ENCODE measurements at regions of chrX and their contacts with region 1.

Region 1: DNA sequence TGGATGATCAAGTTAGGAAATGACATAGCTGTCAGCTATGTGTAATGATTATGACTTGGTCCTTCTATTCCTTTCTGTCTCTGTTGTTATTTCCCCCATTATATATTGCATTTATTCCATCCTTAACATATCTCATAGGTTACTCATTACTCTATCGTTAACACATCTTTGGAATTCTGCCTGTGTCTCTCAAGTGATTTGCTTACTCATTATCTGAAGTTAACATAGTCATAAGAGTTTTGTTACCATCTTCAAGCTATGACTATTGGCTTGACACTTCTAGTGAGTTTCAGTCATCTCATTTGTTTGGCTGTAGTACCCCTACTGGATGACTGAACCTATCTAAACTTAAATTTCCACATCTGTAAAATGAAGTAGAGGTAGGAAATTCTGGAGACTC is 286.1 kb upstream of the PPP1R2C start:
- DNase-seq: no peak
- ATAC-seq: no peak
- H3K4me3 ChIP-seq: no peak overlapping the region
- H3K27ac ChIP-seq: no peak overlapping the region
- H3K4me1 ChIP-seq: no peaks in the 10 kb centered on the region
- H3K27me3 ChIP-seq: no peaks in the 10 kb centered on the region
- CTCF ChIP-seq: no peak
- POLR2A ChIP-seq: no peak
- RAD21 ChIP-seq: no peak

Region 2: GRCh38 chrX:41785685-41786084 is 1278.4 kb before region 1 on chrX:
- CTCF ChIA-PET with region 1: no interaction called
- POLR2A ChIA-PET with region 1: no interaction called
- dilution Hi-C with region 1: no loop called
- in situ Hi-C with region 1: no loop called
- intact Hi-C with region 1: no loop called
- DNase-seq: peak; percentile 63
- ATAC-seq: peak; percentile 70
- H3K4me3 ChIP-seq: no peak overlapping the region
- H3K27ac ChIP-seq: no peak overlapping the region
- H3K4me1 ChIP-seq: peaks cover 3% of the 10 kb centered on the region
- H3K27me3 ChIP-seq: no peaks in the 10 kb centered on the region; the same call in 1 of the 2 replicates
- CTCF ChIP-seq: no peak
- POLR2A ChIP-seq: no peak
- RAD21 ChIP-seq: no peak

Region 3: GRCh38 chrX:42175843-42176242 is 888.3 kb before region 1 on chrX:
- CTCF ChIA-PET with region 1: no interaction called
- POLR2A ChIA-PET with region 1: no interaction called
- dilution Hi-C with region 1: no loop called
- in situ Hi-C with region 1: no loop called
- intact Hi-C with region 1: no loop called
- DNase-seq: no peak
- ATAC-seq: no peak
- H3K4me3 ChIP-seq: no peak overlapping the region
- H3K27ac ChIP-seq: no peak overlapping the region
- H3K4me1 ChIP-seq: no peaks in the 10 kb centered on the region
- H3K27me3 ChIP-seq: peaks cover 13% of the 10 kb centered on the region
- CTCF ChIP-seq: no peak
- POLR2A ChIP-seq: no peak
- RAD21 ChIP-seq: no peak

Region 4: DNA sequence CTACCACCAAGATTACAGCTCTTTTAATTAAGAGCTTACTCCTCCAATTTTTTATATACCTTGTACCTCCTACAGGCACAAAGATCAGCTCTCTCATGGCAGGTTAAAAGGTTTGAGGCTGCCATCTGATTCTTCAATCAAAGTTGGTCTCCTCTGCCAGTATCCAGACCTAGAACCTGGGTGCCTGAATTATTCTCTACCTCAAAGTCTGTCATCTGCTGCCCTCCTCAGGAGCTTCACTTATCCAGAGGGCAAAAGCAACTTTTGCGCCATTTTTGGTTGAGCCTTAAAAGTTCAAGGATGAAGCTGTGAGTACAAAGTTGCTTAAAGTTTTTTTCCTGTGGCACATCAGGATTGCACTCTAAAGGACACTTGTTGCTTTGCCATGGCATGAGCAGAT is 57.5 kb after region 1 on chrX:
- CTCF ChIA-PET with region 1: no interaction called
- POLR2A ChIA-PET with region 1: no interaction called
- dilution Hi-C with region 1: loop called (anchors 10 kb)
- in situ Hi-C with region 1: no loop called
- intact Hi-C with region 1: no loop called
- DNase-seq: no peak
- ATAC-seq: no peak
- H3K4me3 ChIP-seq: no peak overlapping the region
- H3K27ac ChIP-seq: no peak overlapping the region
- H3K4me1 ChIP-seq: no peaks in the 10 kb centered on the region
- H3K27me3 ChIP-seq: no peaks in the 10 kb centered on the region
- CTCF ChIP-seq: 0 out of 2 replicates have a peak, but pooled peaks have one; percentile 2
- POLR2A ChIP-seq: no peak
- RAD21 ChIP-seq: no peak